Upper lobe of right lung (tissue), 1 donor: ENCODE measurements at regions of chr11 and their contacts with region 1.

Region 1: DNA sequence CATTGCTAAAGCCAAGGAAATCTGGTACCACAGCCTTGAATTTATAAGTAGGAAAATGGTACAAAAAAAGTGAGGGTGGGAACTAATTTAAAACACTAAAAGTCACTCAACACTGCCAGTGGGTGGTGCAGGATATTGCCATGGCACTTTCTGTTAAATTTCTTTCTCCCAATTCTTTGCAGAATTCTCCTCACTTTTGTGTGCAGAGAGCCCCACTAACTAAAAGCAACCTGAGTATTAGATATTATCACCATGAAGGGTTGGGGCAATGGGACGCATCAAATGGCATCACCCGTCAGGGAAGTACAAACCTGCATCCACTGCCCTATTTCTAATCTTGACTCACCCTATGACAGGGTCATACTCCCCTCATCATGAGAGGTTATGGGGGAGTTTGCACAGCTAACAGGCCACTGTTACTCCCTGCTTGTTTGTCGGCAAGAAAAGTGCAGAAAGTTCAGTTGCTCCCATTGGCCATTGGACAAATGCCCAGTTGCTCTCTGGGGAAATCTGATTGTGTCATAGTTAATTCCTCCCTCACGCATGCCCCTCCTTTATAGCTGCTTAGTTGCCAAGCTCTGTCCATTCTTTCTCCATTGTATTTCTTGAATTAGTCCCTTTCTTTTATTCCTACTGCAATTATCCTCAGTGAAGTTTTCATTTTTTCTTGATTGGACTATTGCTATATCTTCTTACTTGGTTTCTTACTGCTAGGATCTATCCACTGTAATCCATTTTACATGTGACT is 93.8 kb upstream of the BLID start:
- DNase-seq: no peak
- ATAC-seq: peak; percentile 59
- H3K4me3 ChIP-seq: no peak overlapping the region
- H3K27ac ChIP-seq: no peak overlapping the region
- H3K4me1 ChIP-seq: peaks cover 17% of the 10 kb centered on the region
- H3K27me3 ChIP-seq: no peaks in the 10 kb centered on the region
- CTCF ChIP-seq: no peak

Region 2: GRCh38 chr11:121655537-121656327 is 554.1 kb before region 1 on chr11:
- intact Hi-C with region 1: loop called (anchors 5 kb)
- DNase-seq: peak; percentile 92
- ATAC-seq: peak; percentile 96
- H3K4me3 ChIP-seq: peak overlapping the region; percentile 59
- H3K27ac ChIP-seq: peak overlapping the region; percentile 87
- H3K4me1 ChIP-seq: peaks cover 9% of the 10 kb centered on the region
- H3K27me3 ChIP-seq: no peaks in the 10 kb centered on the region
- CTCF ChIP-seq: peak; percentile 82